Mammary epithelial cell (primary cell): ENCODE measurements at regions of chr6 and their contacts with region 1.

Region 1: DNA sequence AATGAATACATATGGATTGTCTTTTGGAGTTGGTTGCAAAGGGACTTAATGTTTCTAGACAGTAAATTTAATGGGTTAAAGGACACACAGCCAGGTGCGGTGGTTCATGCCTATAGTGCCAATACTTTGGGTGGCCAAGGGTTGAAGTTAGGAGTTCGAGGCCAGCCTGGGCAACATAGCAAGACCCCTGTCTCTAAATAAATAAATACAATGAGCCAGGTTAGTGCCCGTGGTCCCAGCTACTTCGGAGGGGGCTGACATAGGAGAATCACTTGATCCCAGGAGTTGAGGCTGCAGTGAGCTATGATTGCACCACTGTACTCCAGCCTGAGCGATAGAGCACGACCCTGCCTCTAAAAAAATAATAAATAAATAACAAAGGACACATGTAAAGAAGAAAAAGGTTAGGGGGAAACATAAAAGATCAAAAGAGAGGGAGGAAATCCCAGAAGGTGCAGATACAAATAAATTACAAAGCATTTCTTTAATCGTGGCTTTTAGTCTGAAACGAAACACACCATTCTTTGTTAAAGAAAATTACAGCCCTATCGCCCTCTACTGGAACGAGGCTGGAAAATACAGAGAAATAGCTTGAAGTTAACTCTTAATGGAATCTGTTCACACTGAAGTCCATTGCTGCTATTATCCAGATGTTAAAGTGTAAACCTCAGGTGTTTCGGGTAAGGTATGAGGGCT is 42.6 kb upstream of the SCML4 start:
- DNase-seq: peak; percentile 34
- H3K4me3 ChIP-seq: no peak overlapping the region
- H3K27ac ChIP-seq: no peak overlapping the region
- H3K4me1 ChIP-seq: no peaks in the 10 kb centered on the region
- H3K27me3 ChIP-seq: no peaks in the 10 kb centered on the region
- CTCF ChIP-seq: peak; percentile 59 to 62

Region 2: DNA sequence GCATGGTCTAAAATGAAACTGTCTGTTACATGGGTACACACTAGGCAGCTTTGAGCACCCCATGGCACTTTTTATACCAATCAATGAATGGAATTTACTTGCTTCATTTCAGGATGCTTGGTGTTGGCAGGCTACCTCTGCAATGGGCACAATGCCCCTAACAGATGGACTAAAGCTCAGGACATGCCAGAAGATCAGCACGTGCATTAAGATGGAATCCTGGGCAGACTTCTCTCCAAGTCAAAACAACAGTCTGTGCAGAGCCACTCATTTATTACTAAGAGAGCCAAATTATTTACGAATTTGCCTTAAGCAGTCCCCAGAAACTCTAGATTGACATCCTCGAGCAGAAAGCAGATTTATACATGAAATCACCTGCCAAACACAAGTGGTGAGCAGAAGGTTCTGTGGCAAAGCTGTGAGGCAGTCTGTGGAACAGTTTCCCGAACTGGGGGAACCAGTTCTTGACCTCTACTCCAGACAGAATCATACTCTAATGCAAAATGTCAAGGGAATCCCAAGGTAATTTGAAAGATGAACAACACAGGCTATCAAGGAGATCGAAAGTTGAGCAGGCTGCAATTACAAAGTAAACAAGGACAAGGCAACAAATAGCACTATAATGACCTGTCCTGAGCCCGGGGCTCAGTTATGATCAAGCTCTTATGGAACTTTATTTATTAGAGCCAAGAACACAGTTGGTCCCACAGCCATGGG is 13.3 kb after region 1 on chr6:
- CTCF ChIA-PET with region 1: interaction called, 11 read pairs
- dilution Hi-C with region 1: no loop called
- in situ Hi-C with region 1: no loop called
- intact Hi-C with region 1: no loop called
- DNase-seq: no peak
- H3K4me3 ChIP-seq: no peak overlapping the region
- H3K27ac ChIP-seq: no peak overlapping the region
- H3K4me1 ChIP-seq: no peaks in the 10 kb centered on the region
- H3K27me3 ChIP-seq: no peaks in the 10 kb centered on the region
- CTCF ChIP-seq: no peak

Region 3: GRCh38 chr6:108348655-108349349 is 482.0 kb after region 1 on chr6:
- CTCF ChIA-PET with region 1: no interaction called
- dilution Hi-C with region 1: no loop called
- in situ Hi-C with region 1: no loop called
- intact Hi-C with region 1: no loop called
- DNase-seq: no peak
- H3K4me3 ChIP-seq: no peak overlapping the region
- H3K27ac ChIP-seq: no peak overlapping the region
- H3K4me1 ChIP-seq: no peaks in the 10 kb centered on the region
- H3K27me3 ChIP-seq: no peaks in the 10 kb centered on the region
- CTCF ChIP-seq: no peak